Breast epithelium (tissue), 4 donors: ENCODE measurements at regions of chr20 and their contacts with region 1.

Region 1: DNA sequence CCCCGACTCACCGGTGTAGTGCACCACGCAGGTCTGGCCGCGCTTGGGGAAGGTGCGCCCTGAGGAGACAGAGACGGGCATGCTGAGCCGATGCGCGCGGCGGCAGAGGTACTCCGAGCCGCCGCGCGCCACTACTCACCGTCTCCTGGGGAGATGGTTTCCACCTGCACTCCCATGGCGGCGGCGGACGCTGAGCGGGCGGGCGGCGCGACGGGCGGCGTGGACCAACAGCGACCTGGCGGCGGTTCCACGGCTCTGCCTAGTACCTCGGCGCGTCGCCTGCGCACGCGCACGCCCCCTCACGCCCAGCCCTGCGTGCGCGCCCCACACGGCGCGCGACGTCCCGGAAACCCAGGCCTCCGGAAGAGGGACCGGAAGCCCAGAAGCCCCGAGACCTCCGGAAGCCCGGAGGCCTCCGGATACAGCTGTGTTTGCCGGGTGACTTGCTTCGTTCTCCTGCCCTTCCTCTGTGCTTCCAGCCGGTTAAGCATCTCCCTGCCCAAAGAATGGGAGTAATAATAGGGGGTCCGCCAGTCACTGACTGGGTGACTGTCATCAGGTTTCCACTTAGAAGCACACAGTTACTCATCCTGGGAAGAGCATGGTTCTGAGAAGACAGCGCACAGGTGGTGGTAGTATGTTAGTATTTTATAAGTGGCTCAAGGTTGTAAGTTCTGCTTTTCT is at the start of gene FKBP1A:
- DNase-seq: peak; percentile 83 to 86
- H3K4me3 ChIP-seq: peak within 1 kb of the TSS; percentile 69 to 98 (median 91)
- H3K27ac ChIP-seq: peak within 1 kb of the TSS; percentile 79 to 91
- H3K4me1 ChIP-seq: peaks cover 3 to 25% of the 10 kb centered on the region in 2 donors
- H3K27me3 ChIP-seq: no peaks in the 10 kb centered on the region
- CTCF ChIP-seq: peak in 1 of 3 donors; percentile 10
- POLR2A ChIP-seq: no peak
- total RNA-seq, gene FKBP1A: 115 to 191 (median 128) TPM

Region 2: GRCh38 chr20:1177680-1178079 is 215.3 kb before region 1 on chr20:
- intact Hi-C with region 1: no loop called
- DNase-seq: no peak
- H3K4me3 ChIP-seq: no peak overlapping the region
- H3K27ac ChIP-seq: no peak overlapping the region
- H3K4me1 ChIP-seq: no peaks in the 10 kb centered on the region
- H3K27me3 ChIP-seq: no peaks in the 10 kb centered on the region
- CTCF ChIP-seq: no peak
- POLR2A ChIP-seq: no peak

Region 3: DNA sequence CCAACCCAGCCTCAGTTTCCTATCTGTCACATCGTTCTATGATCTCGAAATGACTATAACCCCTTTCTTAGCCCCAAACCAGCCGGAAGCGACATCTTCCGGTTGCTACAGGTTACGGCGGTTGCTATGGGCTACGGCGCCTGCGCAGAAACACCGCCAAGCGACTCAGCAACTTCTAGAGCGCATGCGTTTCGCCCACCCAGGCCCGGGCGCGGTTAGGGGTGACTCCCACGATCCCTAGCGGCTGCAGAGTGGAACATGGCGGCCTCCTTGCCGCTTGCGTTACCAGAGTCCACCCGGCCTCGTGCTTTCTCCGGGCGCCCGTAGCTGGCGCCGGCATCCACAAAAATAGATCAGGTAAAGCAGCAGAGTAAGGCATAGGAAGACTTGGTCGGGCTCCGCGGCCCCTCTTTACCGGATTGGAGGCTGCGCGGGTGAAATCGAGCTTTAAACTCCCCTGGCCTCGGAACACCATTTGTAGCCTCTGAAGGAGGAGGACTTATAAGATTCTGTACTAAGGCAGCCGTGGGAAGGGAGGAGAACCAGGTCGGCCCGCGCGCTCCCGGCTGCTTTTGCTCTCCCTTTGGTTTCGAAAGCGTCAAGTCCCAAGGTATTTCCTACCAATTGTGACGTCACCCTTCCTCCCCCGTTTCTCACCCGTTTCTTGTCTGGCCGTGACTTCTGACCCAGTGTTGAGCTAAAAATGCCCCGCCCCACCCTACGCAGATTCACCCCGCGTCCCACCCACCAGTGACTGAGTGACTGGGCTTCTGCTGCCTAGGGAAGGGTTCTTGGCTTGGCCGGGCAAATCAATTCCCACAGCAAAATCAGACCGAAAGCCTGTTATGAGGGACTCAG is 67.6 kb before region 1 on chr20:
- intact Hi-C with region 1: loop called (anchors 5 kb)
- DNase-seq: peak; percentile 93
- H3K4me3 ChIP-seq: peak overlapping the region; percentile 76 to 88 (median 85)
- H3K27ac ChIP-seq: peak overlapping the region; percentile 98 to 99
- H3K4me1 ChIP-seq: peaks cover 0 to 27% of the 10 kb centered on the region in 2 donors
- H3K27me3 ChIP-seq: no peaks in the 10 kb centered on the region
- CTCF ChIP-seq: peak in 2 of 3 donors; percentile 59 to 63
- POLR2A ChIP-seq: peak; percentile 90

Region 4: GRCh38 chr20:1377984-1378734 is 14.8 kb before region 1 on chr20:
- intact Hi-C with region 1: loop called (anchors 1 kb)
- DNase-seq: no peak
- H3K4me3 ChIP-seq: no peak overlapping the region
- H3K27ac ChIP-seq: peak overlapping the region in 1 of 2 donors; percentile 59
- H3K4me1 ChIP-seq: peaks cover 0 to 4% of the 10 kb centered on the region in 2 donors
- H3K27me3 ChIP-seq: no peaks in the 10 kb centered on the region
- CTCF ChIP-seq: no peak
- POLR2A ChIP-seq: no peak

Region 5: GRCh38 chr20:1423625-1424106 is 30.7 kb after region 1 on chr20:
- intact Hi-C with region 1: no loop called
- DNase-seq: no peak
- H3K4me3 ChIP-seq: no peak overlapping the region
- H3K27ac ChIP-seq: no peak overlapping the region
- H3K4me1 ChIP-seq: no peaks in the 10 kb centered on the region
- H3K27me3 ChIP-seq: no peaks in the 10 kb centered on the region
- CTCF ChIP-seq: no peak
- POLR2A ChIP-seq: no peak